Dendritic cell treated with granulocyte-macrophage colony-stimulating factor and Interleukin-4, amounts not matched to agents 40 ng/mL and 50 ng/mL, for 4 days (primary cell): ENCODE measurements at regions of chr19 and their contacts with region 1.

Region 1: DNA sequence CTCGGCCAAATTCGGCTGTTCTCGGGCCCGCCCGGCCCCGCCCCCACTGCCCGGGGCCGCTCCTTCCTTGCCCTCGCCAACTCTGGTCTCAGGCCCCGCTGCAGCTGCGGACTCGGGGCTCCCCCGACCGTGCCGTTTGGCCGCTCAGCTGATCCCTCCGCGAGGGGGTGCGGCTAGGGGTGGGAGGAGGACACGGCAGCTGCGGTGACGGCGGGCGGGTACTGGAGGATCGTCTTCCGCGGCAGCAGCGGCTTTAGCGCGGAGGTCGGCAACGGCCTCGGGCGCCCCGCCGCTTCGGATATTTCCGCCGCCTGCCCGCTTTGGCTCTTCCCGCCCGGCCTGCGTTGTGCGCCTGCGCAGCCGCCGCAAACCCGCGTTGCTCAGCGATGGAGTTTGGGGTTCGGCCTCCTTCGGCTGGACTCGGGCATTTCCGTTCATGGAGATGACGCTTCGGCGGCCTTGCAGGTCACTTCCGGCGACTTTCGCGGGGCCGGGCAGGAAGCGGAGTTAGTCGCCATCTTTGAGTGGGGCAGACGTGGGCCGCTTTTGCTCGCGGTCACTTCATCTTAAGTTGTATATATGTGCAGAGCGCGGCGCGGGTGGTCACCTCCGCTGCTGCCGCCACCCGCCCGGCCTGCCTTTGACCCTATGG is 338 bp upstream of the UBE2M start:
- H3K4me3 Mint-ChIP-seq: peak overlapping the region; percentile 94
- H3K27ac Mint-ChIP-seq: peak overlapping the region; percentile 99
- H3K4me1 Mint-ChIP-seq: peaks cover 86% of the 10 kb centered on the region
- H3K27me3 Mint-ChIP-seq: peaks cover 36% of the 10 kb centered on the region

Region 2: GRCh38 chr19:58466760-58467589 is 91.8 kb before region 1 on chr19 and contains the start of gene ZNF324:
- intact Hi-C with region 1: no loop called
- H3K4me3 Mint-ChIP-seq: peak within 1 kb of the TSS; percentile 76
- H3K27ac Mint-ChIP-seq: peak within 1 kb of the TSS; percentile 76
- H3K4me1 Mint-ChIP-seq: peaks cover 26% of the 10 kb centered on the region
- H3K27me3 Mint-ChIP-seq: no peaks in the 10 kb centered on the region

Region 3: GRCh38 chr19:58492265-58492664 is 66.5 kb before region 1 on chr19:
- intact Hi-C with region 1: no loop called
- H3K4me3 Mint-ChIP-seq: no peak overlapping the region
- H3K27ac Mint-ChIP-seq: no peak overlapping the region
- H3K4me1 Mint-ChIP-seq: no peaks in the 10 kb centered on the region
- H3K27me3 Mint-ChIP-seq: no peaks in the 10 kb centered on the region

Region 4: GRCh38 chr19:58519355-58520256 is 39.1 kb before region 1 on chr19 and contains the start of gene ZBTB45:
- intact Hi-C with region 1: loop called (anchors 1 kb)
- H3K4me3 Mint-ChIP-seq: peak within 1 kb of the TSS; percentile 96
- H3K27ac Mint-ChIP-seq: peak within 1 kb of the TSS; percentile 95
- H3K4me1 Mint-ChIP-seq: peaks cover 60% of the 10 kb centered on the region
- H3K27me3 Mint-ChIP-seq: no peaks in the 10 kb centered on the region

Region 5: DNA sequence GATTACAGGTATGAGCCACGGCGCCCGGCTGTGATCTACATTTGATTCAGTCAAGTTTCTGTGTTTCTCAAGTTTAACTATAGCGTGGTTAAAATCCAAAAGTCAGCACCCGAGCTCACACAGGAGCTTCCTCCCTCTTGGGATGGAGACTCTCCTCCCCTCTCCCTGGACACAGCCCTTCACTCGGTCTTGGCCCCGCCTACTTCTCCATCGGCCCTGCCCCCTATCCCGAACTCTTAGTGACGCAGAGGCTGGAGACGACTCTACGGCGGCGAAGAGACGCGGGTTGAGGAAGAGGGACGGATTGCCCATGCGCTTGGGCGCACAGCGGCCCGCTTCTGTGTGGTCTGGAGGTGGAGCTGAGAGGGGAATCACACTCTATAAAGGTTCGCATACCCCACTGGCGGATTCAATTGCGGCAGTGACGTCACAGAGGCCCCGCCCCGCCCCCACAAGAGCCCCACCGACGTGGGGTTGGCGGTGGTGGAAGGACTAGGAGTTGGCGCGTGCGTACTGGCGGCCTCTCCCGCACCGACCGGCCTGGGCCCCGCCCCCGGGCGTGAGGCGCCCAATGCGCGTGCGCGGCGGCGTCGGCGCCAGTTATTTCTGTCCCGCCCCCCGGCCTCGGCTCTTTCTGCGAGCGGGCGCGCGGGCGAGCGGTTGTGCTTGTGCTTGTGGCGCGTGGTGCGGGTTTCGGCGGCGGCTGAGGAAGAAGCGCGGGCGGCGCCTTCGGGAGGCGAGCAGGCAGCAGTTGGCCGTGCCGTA is 14.7 kb before region 1 on chr19 and contains the start of gene TRIM28:
- intact Hi-C with region 1: loop called (anchors 2 kb)
- H3K4me3 Mint-ChIP-seq: peak within 1 kb of the TSS; percentile 92
- H3K27ac Mint-ChIP-seq: peak within 1 kb of the TSS; percentile 95
- H3K4me1 Mint-ChIP-seq: peaks cover 42% of the 10 kb centered on the region
- H3K27me3 Mint-ChIP-seq: no peaks in the 10 kb centered on the region

Region 6: GRCh38 chr19:58572818-58573657 is 14.3 kb after region 1 on chr19 and contains the start of gene MZF1:
- intact Hi-C with region 1: loop called (anchors 1 kb)
- H3K4me3 Mint-ChIP-seq: peak within 1 kb of the TSS; percentile 85
- H3K27ac Mint-ChIP-seq: peak within 1 kb of the TSS; percentile 98
- H3K4me1 Mint-ChIP-seq: peaks cover 47% of the 10 kb centered on the region
- H3K27me3 Mint-ChIP-seq: no peaks in the 10 kb centered on the region